CD4-positive, alpha-beta memory T cell (primary cell): ENCODE measurements at regions of chr1 and their contacts with region 1.

Region 1: GRCh38 chr1:27858072-27858958 is 14.0 kb upstream of the THEMIS2 start:
- DNase-seq: peak; percentile 77 to 81 (median 79)
- H3K4me3 ChIP-seq: no peak overlapping the region
- H3K4me3 Mint-ChIP-seq: peak overlapping the region in 2 of 8 donors; percentile 16 to 43
- H3K27ac ChIP-seq: no peak overlapping the region
- H3K27ac Mint-ChIP-seq: peak overlapping the region in 3 of 7 donors; percentile 15 to 65 (median 43)
- H3K4me1 ChIP-seq: peaks cover 14% of the 10 kb centered on the region
- H3K4me1 Mint-ChIP-seq: peaks cover 13 to 28% (median 17%) of the 10 kb centered on the region in 4 donors
- H3K27me3 ChIP-seq: no peaks in the 10 kb centered on the region
- H3K27me3 Mint-ChIP-seq: no peaks in the 10 kb centered on the region

Region 2: DNA sequence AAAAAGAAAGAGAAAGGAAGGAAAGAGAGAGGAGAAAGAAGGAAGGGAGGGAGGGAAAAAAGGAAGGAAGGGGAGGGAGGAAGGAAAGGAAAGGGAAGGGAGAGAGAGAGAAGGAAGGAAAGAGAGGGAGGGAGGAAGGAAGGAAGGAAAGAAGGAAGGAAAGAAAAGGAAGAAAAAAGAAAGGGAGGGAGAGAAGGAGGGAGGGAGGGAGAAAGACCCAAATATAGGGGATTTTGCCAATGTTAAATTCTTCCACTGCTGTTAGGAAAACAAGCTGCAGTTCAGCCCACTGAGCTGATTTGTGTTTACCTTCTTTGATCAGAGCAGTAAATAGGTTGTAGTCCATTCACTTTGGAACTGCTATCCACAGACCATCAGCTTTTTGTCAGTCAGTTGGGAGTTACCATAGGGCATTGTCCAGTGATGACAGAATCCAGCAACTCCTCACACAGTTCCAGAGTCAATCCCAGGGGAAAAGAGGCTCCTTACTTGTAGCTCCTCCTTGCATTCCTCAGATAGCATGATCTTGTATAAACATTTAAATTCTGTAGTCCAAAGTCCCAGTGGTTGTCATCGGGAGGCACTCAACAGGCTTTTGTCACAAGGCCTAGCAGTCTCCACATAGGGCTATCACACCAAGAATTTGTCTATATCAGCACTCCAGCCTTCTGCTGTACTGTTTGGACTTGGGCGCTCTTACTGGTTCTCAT is 41.2 kb before region 1 on chr1:
- CTCF ChIA-PET with region 1: no interaction called
- POLR2A ChIA-PET with region 1: no interaction called
- intact Hi-C with region 1: no loop called
- DNase-seq: no peak
- H3K4me3 ChIP-seq: no peak overlapping the region
- H3K4me3 Mint-ChIP-seq: no peak overlapping the region
- H3K27ac ChIP-seq: no peak overlapping the region
- H3K27ac Mint-ChIP-seq: peak overlapping the region in 3 of 7 donors; percentile 22 to 85 (median 59)
- H3K4me1 ChIP-seq: no peaks in the 10 kb centered on the region
- H3K4me1 Mint-ChIP-seq: no peaks in the 10 kb centered on the region
- H3K27me3 ChIP-seq: no peaks in the 10 kb centered on the region
- H3K27me3 Mint-ChIP-seq: no peaks in the 10 kb centered on the region

Region 3: DNA sequence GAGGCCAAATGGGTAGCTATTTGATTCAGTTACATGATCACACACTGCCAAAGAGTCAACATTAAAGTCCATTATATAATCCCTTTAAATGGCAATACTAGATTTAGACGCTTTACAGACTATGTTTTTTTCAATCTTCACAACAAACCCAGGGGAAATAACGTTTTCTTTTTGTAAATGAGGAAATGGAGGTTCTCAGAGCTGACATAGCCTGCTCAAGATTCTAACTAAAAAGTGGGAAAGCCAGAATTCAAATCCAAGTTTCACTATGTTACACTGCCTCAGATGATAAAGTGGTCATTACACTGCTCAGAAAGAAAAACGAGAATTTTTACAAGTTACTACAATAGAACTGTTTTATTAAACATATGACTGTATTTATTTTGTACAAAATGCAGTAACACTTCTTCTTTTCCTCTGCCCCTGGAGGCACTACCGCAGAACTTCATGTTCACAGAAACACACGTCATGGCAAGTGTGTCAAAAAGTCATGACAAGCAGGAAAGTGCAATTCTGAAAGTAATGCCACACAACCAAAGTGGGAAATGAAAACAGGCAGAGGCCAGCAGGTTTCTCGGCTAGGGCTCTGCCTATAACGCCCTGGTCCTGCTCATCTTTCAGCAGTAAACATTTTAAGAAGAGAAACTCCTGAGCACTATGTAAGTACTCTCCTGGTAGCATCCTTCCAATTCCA is 33.0 kb after region 1 on chr1:
- CTCF ChIA-PET with region 1: interaction called, 4 read pairs
- POLR2A ChIA-PET with region 1: interaction called, 4 read pairs
- intact Hi-C with region 1: loop called (anchors 2 kb)
- DNase-seq: peak in 4 of 5 donors; percentile 33 to 67 (median 50)
- H3K4me3 ChIP-seq: no peak overlapping the region
- H3K4me3 Mint-ChIP-seq: peak overlapping the region in 6 of 8 donors; percentile 8 to 80 (median 39)
- H3K27ac ChIP-seq: peak overlapping the region; percentile 52
- H3K27ac Mint-ChIP-seq: peak overlapping the region; percentile 43 to 96 (median 89)
- H3K4me1 ChIP-seq: peaks cover 60% of the 10 kb centered on the region
- H3K4me1 Mint-ChIP-seq: peaks cover 31 to 77% (median 54%) of the 10 kb centered on the region in 4 donors
- H3K27me3 ChIP-seq: no peaks in the 10 kb centered on the region
- H3K27me3 Mint-ChIP-seq: no peaks in the 10 kb centered on the region

Region 4: DNA sequence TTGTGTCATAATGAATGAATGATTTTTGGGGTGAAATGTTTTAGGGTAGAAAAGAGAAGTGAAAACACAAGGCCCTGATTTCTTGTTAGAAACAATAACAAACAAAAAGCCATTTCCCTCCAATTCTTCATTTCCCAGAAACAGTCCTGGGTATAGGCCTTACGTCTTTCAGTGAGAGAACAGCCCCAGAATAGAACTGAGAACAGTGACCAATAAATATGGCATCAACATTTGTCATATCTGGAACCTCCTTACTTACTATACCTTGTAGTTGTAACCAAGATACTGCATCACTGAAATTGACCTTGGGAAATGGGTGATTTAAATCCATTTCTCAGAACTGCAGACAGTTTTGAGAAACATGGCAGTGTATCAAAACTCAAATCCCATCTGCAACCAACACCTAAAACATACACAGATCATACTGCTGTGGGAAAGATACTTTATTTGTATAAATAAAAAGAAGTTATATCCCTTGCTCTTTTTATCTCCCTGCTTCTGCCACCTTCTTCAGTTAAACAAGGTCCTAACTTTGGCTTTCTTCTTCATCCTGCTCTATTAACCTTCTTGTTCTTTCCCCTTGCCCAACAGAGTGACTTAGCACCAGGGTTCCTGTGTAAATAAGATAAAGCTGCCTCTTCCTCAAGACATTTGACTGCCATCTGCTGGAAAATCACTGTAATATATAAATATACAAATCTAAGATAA is 121.0 kb after region 1 on chr1:
- CTCF ChIA-PET with region 1: interaction called, 56 read pairs
- POLR2A ChIA-PET with region 1: interaction called, 9 read pairs
- intact Hi-C with region 1: loop called (anchors 1 kb)
- DNase-seq: peak in 4 of 5 donors; percentile 49 to 56 (median 53)
- H3K4me3 ChIP-seq: no peak overlapping the region
- H3K4me3 Mint-ChIP-seq: no peak overlapping the region
- H3K27ac ChIP-seq: no peak overlapping the region
- H3K27ac Mint-ChIP-seq: no peak overlapping the region
- H3K4me1 ChIP-seq: no peaks in the 10 kb centered on the region
- H3K4me1 Mint-ChIP-seq: no peaks in the 10 kb centered on the region
- H3K27me3 ChIP-seq: no peaks in the 10 kb centered on the region
- H3K27me3 Mint-ChIP-seq: no peaks in the 10 kb centered on the region

Region 5: DNA sequence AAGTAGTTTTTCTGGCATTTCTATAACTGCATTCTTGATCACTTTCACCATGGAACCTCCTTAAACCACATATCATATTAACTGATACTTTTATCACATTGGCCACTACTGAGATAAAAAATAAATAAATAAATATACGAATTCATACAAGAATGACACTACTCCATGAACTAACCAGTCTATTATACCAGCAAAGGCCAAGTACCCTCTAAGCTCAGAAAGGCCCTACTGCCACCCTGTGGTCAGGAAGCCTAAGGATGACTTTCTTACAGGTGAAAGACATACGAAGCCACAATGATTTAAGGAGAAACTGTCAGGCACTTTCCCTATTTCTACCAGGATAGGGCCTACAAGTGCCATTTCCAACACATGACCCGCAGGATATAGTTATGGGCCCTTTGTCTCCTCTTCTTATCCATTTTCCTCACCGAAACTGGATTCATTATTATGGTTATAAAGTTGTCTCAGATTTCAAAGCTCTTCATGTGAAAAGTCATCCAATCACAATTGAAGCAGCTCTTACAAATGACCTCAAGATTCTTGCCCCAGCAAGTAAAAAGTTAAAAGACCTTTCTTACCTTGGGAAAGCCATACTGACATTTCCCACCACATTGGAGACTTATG is 350.6 kb after region 1 on chr1:
- CTCF ChIA-PET with region 1: interaction called, 3 read pairs
- POLR2A ChIA-PET with region 1: no interaction called
- intact Hi-C with region 1: loop called (anchors 2 kb)
- DNase-seq: peak; percentile 63 to 69 (median 65)
- H3K4me3 ChIP-seq: no peak overlapping the region
- H3K4me3 Mint-ChIP-seq: no peak overlapping the region
- H3K27ac ChIP-seq: no peak overlapping the region
- H3K27ac Mint-ChIP-seq: peak overlapping the region in 2 of 7 donors; percentile 20 to 44
- H3K4me1 ChIP-seq: no peaks in the 10 kb centered on the region
- H3K4me1 Mint-ChIP-seq: peaks cover 8 to 10% (median 9%) of the 10 kb centered on the region in 4 donors
- H3K27me3 ChIP-seq: no peaks in the 10 kb centered on the region
- H3K27me3 Mint-ChIP-seq: no peaks in the 10 kb centered on the region